Activated B cell treated with CpG ODN at 0.5 μM for 24 hours (primary cell): ENCODE measurements at regions of chr4 and their contacts with region 1.

Region 1: GRCh38 chr4:84971319-84971932 is 4.9 kb upstream of the WDFY3 start:
- DNase-seq: no peak
- ATAC-seq: no peak
- H3K4me3 Mint-ChIP-seq: no peak overlapping the region
- H3K27ac Mint-ChIP-seq: no peak overlapping the region
- H3K4me1 Mint-ChIP-seq: peaks cover 9% of the 10 kb centered on the region
- H3K27me3 Mint-ChIP-seq: peaks cover 21% of the 10 kb centered on the region
- CTCF ChIP-seq: no peak

Region 2: DNA sequence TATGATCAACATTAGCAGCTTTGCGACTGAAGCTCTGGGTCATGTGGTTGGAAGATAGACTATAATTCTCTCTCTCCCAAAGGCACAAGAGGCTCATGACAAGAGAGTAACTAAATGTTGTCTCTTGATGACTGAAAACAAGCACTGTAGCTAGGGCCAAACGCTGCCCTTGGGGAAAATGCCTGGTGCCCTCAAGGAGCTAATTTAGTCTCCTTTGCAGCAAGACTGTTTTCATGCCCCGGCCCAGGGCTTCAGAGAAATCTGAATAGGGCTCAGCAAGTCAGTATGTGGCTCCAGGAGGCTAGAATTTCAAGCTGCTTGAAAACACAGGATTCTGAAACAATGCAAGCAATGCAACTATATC is 1023.6 kb before region 1 on chr4:
- CTCF ChIA-PET with region 1: no interaction called
- POLR2A ChIA-PET with region 1: no interaction called
- intact Hi-C with region 1: no loop called
- DNase-seq: no peak
- ATAC-seq: no peak
- H3K4me3 Mint-ChIP-seq: no peak overlapping the region
- H3K27ac Mint-ChIP-seq: no peak overlapping the region
- H3K4me1 Mint-ChIP-seq: no peaks in the 10 kb centered on the region
- H3K27me3 Mint-ChIP-seq: no peaks in the 10 kb centered on the region
- CTCF ChIP-seq: no peak

Region 3: DNA sequence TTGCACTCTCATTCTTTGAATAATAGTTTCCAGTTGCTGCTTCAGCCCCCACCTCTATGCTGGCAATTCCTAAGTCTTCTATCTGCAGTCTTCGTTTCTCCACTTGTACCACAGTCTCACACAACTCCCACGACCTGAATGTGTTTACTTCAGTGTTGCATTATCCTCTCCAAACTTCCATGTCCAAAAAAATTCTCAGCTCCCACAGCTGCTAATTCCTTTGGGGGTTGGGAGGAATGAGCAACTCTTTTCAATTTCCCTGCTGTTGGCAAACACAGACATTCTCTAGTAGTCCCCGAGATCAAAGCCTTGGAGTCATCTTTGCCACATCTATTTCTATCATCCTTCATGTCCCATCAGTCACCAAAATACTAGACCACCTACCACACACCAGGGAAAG is 402.9 kb before region 1 on chr4:
- CTCF ChIA-PET with region 1: no interaction called
- POLR2A ChIA-PET with region 1: no interaction called
- intact Hi-C with region 1: no loop called
- DNase-seq: no peak
- ATAC-seq: no peak
- H3K4me3 Mint-ChIP-seq: no peak overlapping the region
- H3K27ac Mint-ChIP-seq: no peak overlapping the region
- H3K4me1 Mint-ChIP-seq: no peaks in the 10 kb centered on the region
- H3K27me3 Mint-ChIP-seq: peaks cover 6% of the 10 kb centered on the region
- CTCF ChIP-seq: no peak

Region 4: GRCh38 chr4:84582302-84583000 is 389.0 kb before region 1 on chr4:
- CTCF ChIA-PET with region 1: interaction called, 10 read pairs
- POLR2A ChIA-PET with region 1: no interaction called
- intact Hi-C with region 1: loop called (anchors 2 kb)
- DNase-seq: peak; percentile 82
- ATAC-seq: peak; percentile 86
- H3K4me3 Mint-ChIP-seq: peak overlapping the region; percentile 78
- H3K27ac Mint-ChIP-seq: no peak overlapping the region
- H3K4me1 Mint-ChIP-seq: peaks cover 13% of the 10 kb centered on the region
- H3K27me3 Mint-ChIP-seq: peaks cover 55% of the 10 kb centered on the region
- CTCF ChIP-seq: no peak

Region 5: GRCh38 chr4:84750253-84750959 is 221.0 kb before region 1 on chr4:
- CTCF ChIA-PET with region 1: interaction called, 13 read pairs
- POLR2A ChIA-PET with region 1: no interaction called
- intact Hi-C with region 1: loop called (anchors 1 kb)
- DNase-seq: no peak
- ATAC-seq: no peak
- H3K4me3 Mint-ChIP-seq: no peak overlapping the region
- H3K27ac Mint-ChIP-seq: no peak overlapping the region
- H3K4me1 Mint-ChIP-seq: no peaks in the 10 kb centered on the region
- H3K27me3 Mint-ChIP-seq: peaks cover 5% of the 10 kb centered on the region
- CTCF ChIP-seq: peak; percentile 51

Region 6: GRCh38 chr4:85102606-85103005 is 131.2 kb after region 1 on chr4:
- CTCF ChIA-PET with region 1: no interaction called
- POLR2A ChIA-PET with region 1: no interaction called
- intact Hi-C with region 1: no loop called
- DNase-seq: no peak
- ATAC-seq: no peak
- H3K4me3 Mint-ChIP-seq: no peak overlapping the region
- H3K27ac Mint-ChIP-seq: no peak overlapping the region
- H3K4me1 Mint-ChIP-seq: no peaks in the 10 kb centered on the region
- H3K27me3 Mint-ChIP-seq: peaks cover 22% of the 10 kb centered on the region
- CTCF ChIP-seq: no peak